ENCODE measurements at regions of chr10 and their contacts with region 1.

Region 1: DNA sequence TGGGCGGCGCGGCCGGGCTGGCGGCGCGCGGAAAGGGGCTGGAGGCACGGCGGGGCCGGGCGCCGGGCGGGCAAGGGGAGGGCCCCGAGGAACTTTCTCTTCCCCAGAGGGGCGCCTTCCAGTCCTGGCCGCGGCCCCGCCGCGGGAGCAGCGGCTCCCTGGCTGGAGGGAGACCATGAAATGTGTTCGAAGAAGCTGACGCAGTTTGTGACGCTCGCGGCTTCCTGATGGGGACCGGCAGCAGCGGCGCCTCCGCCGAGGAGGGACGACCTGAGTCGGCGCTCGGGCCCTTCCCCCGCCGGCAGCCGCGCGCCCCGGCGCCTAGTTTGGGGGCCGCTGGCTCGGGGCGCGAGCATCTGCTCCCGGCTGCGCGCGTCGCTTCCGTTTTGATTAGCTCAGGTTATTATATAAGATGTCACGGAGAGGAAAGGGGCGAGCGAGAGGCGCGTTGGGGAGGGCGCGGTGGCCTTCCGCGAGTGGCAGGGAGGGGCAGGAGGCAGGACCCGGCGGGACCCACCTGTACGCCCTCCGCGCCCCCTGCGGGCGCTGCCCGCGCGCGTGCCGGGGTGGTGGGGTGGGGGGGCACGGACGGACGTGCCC is 57.1 kb upstream of the PCGF5 start:
- DNase-seq: peak; percentile 83

Region 2: GRCh38 chr10:91090761-91091529 is 72.4 kb before region 1 on chr10:
- intact Hi-C with region 1: loop called (anchors 5 kb)
- DNase-seq: no peak

Region 3: GRCh38 chr10:91220194-91220953 is 57.0 kb after region 1 on chr10 and contains the start of gene PCGF5:
- intact Hi-C with region 1: loop called (anchors 2 kb)
- DNase-seq: peak; percentile 97
- total RNA-seq, gene PCGF5: 135 TPM

Measured in cardiac septum (tissue), 1 donor.